ENCODE measurements at regions of chr3 and their contacts with region 1.

Region 1: DNA sequence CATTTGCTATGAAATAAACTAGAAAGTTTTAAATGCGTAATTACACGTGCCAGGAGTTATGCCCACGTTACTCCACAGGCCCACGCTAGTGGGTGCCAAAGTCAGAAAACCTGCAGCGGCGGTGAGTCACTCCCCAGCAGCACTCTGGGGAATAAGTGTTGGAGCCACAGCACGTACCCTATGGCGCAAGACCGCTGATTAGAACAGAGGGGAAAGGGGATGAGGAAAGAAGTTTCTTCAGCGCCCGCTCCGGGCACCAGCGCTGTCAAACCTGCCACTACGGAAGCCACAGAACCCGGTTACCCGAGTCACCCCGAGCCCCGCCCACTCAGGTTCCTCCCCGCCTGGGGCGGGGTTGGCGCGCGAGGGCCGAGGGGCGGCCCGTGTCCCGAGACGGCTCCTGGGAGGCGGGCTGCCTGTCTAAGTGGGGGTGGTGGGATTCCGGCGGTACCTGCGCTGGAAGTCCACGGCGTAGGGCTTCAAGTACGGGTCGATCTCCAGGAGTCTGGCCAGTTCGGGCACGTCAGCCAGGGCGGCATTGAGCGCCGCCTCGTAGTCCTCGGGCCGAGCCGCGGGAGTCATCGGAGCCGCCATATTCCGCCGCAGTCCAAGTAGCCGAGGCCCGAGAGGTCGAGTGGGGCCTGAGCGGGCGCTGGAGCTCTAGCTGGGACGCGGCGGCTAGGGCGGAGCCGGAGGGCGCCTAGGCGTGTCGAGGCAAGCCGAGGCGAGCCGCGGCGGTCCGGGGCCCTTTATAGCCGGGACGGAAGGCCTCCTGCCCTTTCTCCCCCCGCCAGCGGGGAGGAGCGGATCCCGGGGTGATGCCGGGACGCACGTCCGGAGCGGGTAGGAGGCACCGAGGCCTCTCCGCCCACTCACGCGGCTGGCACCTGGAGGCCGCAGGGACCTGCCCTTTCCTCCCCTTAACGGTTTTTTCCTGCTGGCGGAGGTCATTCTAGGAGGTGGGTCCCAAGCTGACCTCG is at the start of gene GBE1:
- DNase-seq: peak; percentile 96 to 99
- ATAC-seq: peak; percentile 67 to 74
- H3K4me3 ChIP-seq: peak within 1 kb of the TSS; percentile 55 to 77 (median 66)
- H3K27ac ChIP-seq: peak within 1 kb of the TSS; percentile 91 to 98 (median 98)
- H3K4me1 ChIP-seq: peaks cover 47 to 71% of the 10 kb centered on the region in 2 donors
- H3K27me3 ChIP-seq: no peaks in the 10 kb centered on the region
- CTCF ChIP-seq: peak in 4 of 5 experiments; percentile 16 to 37 (median 25)
- POLR2A ChIP-seq: peak; percentile 90 to 96
- total RNA-seq, gene GBE1: 127 to 319 (median 239) TPM

Region 2: DNA sequence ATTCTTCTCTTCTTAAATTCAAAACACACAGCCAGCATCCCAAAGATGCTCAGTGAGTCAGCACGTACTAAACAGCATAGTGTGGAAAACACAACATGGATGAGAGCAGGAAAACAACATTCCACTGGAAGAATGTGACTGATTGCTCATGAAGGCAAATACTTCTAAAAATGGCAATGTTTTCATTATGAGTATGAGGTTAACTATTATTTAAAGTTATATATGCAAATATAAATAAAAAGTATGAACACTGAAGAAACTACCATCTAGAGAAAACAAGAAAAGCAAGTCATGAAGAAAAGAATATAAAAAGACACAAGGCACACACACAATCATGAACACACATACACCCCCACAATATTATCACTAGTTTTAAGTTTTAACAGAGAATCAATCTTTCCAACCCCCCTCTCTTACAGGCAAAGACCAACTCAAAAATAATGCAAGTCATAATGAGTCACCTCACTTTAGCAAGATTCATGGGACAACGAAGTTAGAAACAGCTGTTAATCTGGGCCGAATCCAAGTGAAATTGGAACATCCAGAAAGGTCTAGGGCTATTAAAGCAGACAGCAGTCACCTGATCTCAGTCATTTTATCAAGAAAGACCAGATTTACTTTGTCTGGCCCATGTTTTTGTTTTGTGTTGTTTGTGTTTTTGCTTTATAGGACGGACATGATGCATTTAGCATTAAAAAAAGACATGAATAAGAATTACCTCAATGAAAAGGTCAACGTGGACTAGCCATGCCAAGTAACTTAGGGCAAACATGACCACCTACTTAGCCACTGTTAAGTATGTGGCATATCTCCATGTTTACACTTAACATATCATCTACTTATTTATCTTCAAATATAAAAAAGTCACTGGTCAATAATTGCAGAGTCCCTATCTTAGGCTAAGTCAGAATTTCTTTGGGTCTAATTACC is 17.9 kb before region 1 on chr3:
- in situ Hi-C with region 1: no loop called
- intact Hi-C with region 1: loop called (anchors 1 kb)
- DNase-seq: peak; percentile 80 to 86
- ATAC-seq: peak; percentile 70 to 76
- H3K4me3 ChIP-seq: peak overlapping the region; percentile 2 to 33 (median 22)
- H3K27ac ChIP-seq: peak overlapping the region; percentile 86 to 92 (median 90)
- H3K4me1 ChIP-seq: peaks cover 64 to 80% of the 10 kb centered on the region in 2 donors
- H3K27me3 ChIP-seq: no peaks in the 10 kb centered on the region
- CTCF ChIP-seq: no peak
- POLR2A ChIP-seq: no peak

Measured in gastrocnemius medialis (tissue), 4 donors.